ENCODE measurements at regions of chr16 and their contacts with region 1.

Region 1: GRCh38 chr16:71461686-71462648 is at the start of gene ZNF23:
- DNase-seq: no peak
- H3K4me3 ChIP-seq: peak within 1 kb of the TSS; percentile 98
- CTCF ChIP-seq: no peak

Region 2: DNA sequence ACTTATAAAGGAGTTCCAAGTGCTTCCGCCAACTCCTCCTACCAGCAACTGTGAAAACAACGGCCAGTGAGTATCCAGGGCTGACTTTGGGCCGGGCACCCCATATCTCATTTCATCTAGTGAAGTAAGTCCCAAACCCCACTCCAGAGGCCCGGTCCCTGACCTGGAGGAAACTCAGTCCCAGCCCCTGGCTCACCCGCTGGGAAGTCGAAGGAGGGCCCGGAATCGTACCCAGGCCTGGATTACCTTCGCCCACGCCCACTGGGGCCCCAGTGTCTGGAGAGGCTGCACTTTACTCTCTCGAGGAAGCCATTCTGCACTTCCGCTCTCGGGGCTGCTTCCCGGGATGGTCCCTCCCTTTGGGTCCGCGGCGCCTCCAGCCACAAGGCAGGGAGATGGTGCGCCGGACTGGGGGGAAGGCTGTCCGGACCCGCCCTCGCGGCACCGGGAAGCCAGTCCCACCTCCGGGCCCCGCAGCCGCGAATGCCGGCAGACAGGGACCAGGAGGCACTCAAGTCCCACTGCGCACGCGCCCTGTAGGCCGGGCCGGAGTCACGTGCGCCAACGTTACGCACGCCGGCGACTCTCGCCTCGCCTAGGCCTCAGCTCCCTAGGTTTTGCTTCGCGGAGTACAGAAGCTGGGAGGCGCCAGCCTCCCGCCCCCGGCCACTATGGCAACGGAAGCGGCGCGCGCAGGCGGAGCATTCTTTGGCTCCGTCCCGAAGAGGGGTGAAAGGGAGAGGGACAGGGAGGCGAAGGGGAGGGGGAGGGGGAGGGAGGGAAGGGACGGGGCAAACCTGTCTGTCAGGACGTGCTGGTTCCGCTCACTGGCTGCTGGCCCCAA is 172.9 kb before region 1 on chr16 and contains the start of gene CMTR2:
- CTCF ChIA-PET with region 1: no interaction called
- POLR2A ChIA-PET with region 1: no interaction called
- DNase-seq: peak; percentile 71
- H3K4me3 ChIP-seq: peak within 1 kb of the TSS; percentile 80
- CTCF ChIP-seq: no peak

Region 3: DNA sequence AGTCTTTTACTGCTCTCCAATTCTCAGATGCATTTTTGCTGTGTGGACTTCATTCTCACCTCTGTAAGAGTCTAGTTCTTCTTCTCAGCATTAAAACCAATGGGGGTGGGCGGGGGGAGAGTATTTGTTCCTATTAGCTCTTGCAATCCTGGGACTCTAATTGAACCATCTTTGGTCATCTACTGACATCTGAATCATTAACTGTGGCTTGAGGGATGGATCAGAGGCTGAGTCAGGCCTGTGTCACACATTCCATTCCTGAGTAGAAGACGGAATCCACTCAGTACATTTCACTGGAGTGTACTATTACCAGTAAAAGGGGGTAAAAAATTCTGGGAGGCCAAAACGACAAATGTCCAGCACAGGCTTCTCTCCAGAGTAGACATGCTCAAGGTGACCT is 12.9 kb after region 1 on chr16:
- CTCF ChIA-PET with region 1: interaction called, 20 read pairs
- POLR2A ChIA-PET with region 1: interaction called, 10 read pairs
- DNase-seq: peak; percentile 79
- H3K4me3 ChIP-seq: no peak overlapping the region
- CTCF ChIP-seq: no peak

Region 4: DNA sequence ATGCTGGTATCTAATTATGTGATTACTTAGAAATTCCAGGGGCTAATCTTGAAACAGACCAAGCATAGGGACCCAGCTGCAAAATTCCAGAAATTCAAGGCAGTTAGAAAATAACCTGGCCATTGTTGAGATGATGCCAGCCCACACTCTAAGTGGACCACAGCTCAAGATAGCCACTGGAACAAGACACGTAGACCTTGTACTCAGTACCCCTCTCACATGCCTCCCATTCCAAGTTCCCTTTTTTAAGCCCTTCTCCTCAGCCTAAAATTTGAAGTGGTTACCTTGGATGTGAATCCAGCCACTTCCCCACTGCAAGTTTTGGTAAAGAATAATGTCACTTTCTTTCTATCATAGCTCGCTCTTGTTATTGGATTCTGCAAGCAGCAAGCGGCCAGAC is 31.2 kb after region 1 on chr16:
- CTCF ChIA-PET with region 1: interaction called, 11 read pairs
- POLR2A ChIA-PET with region 1: no interaction called
- DNase-seq: no peak
- H3K4me3 ChIP-seq: no peak overlapping the region
- CTCF ChIP-seq: no peak